ENCODE measurements at regions of chr12 and their contacts with region 1.

Region 1: GRCh38 chr12:74415633-74416032 is 122.0 kb upstream of the ATXN7L3B start:
- DNase-seq: peak; percentile 61
- ATAC-seq: no peak
- H3K4me3 ChIP-seq: no peak overlapping the region
- H3K27ac ChIP-seq: no peak overlapping the region
- H3K4me1 ChIP-seq: 0 out of 2 replicates have a peak, but pooled peaks cover 5% of the 10 kb centered on the region
- H3K27me3 ChIP-seq: no peaks in the 10 kb centered on the region
- CTCF ChIP-seq: peak; percentile 73

Region 2: DNA sequence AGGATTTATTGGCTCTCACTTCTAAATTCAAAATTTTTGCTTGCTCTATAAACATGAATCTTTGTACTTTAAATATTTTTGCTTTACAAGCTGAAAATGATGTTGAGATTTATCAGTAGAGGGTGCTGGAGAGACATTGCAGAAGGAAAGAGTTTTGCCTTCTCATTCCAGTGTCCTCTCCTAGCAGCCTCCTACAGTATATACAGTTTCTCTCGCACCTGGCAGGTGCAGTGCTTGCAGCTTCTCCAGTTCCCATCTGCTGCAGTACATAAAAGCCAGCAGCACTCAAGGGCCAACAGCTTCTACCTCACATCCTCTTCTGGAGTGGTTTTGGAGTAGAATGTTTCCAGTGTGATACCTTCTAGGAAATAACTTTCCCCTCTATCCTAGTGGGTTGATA is 479.8 kb before region 1 on chr12:
- CTCF ChIA-PET with region 1: interaction called, 3 read pairs
- POLR2A ChIA-PET with region 1: no interaction called
- intact Hi-C with region 1: loop called (anchors 1 kb)
- DNase-seq: peak; percentile 57
- ATAC-seq: peak; percentile 78
- H3K4me3 ChIP-seq: no peak overlapping the region
- H3K27ac ChIP-seq: no peak overlapping the region
- H3K4me1 ChIP-seq: no peaks in the 10 kb centered on the region
- H3K27me3 ChIP-seq: no peaks in the 10 kb centered on the region
- CTCF ChIP-seq: peak; percentile 68

Region 3: GRCh38 chr12:74111688-74112360 is 303.8 kb before region 1 on chr12:
- CTCF ChIA-PET with region 1: interaction called, 3 read pairs
- POLR2A ChIA-PET with region 1: no interaction called
- intact Hi-C with region 1: loop called (anchors 1 kb)
- DNase-seq: peak; percentile 58
- ATAC-seq: peak; percentile 70
- H3K4me3 ChIP-seq: no peak overlapping the region
- H3K27ac ChIP-seq: no peak overlapping the region
- H3K4me1 ChIP-seq: no peaks in the 10 kb centered on the region
- H3K27me3 ChIP-seq: no peaks in the 10 kb centered on the region
- CTCF ChIP-seq: peak; percentile 76

Region 4: DNA sequence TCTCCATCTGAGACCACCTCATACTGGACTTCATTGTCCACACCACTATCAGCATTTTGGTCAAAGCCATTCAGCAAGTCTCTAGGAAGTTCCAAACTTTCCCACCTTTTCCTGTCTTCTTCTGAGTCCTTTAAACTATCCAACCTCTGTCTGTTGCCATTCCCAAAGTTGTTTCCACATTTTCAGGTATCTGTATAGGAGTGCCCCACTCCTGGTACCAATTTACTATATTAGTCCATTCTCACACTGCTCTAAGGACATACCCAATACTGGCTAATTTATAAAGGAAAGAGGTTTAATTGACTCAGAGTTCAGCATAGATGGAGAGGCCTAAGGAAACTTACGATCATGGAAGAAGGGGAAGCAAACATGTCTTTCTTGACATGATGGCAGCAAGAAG is 170.2 kb before region 1 on chr12:
- CTCF ChIA-PET with region 1: no interaction called
- POLR2A ChIA-PET with region 1: no interaction called
- intact Hi-C with region 1: no loop called
- DNase-seq: no peak
- ATAC-seq: no peak
- H3K4me3 ChIP-seq: no peak overlapping the region
- H3K27ac ChIP-seq: no peak overlapping the region
- H3K4me1 ChIP-seq: no peaks in the 10 kb centered on the region
- H3K27me3 ChIP-seq: no peaks in the 10 kb centered on the region
- CTCF ChIP-seq: no peak

Region 5: GRCh38 chr12:74328616-74329015 is 87.0 kb before region 1 on chr12:
- CTCF ChIA-PET with region 1: no interaction called
- POLR2A ChIA-PET with region 1: no interaction called
- intact Hi-C with region 1: no loop called
- DNase-seq: no peak
- ATAC-seq: no peak
- H3K4me3 ChIP-seq: no peak overlapping the region
- H3K27ac ChIP-seq: no peak overlapping the region
- H3K4me1 ChIP-seq: no peaks in the 10 kb centered on the region
- H3K27me3 ChIP-seq: no peaks in the 10 kb centered on the region
- CTCF ChIP-seq: no peak

Region 6: DNA sequence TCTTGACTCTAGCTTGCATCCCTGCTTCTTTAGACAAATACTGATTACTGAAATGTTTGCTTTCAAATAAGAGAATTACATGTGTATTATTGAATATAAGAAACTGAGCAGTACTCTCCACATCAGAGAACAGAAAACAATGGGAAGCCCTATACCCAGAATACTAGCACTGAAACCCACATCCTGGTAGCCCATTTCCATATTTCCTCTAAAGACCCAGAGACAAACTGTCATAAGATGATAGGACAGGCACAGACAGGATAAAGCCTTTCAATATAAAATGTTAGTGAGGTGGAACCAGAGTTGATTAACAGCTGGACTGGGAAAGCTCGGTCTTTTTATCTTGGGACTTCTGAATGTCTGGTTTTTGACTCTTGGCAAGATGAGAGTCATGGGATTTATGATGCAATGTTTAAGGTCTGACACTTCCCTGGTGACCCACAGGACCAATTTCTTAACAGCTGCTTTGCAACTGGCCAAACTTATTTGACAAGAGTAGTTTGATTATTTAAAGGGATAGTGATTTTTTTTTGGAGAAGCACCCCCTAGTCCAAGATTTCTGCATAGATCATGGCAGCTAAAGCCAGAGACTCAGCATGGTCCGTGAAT is 44.9 kb before region 1 on chr12:
- CTCF ChIA-PET with region 1: interaction called, 6 read pairs
- POLR2A ChIA-PET with region 1: no interaction called
- intact Hi-C with region 1: loop called (anchors 1 kb)
- DNase-seq: no peak
- ATAC-seq: no peak
- H3K4me3 ChIP-seq: no peak overlapping the region
- H3K27ac ChIP-seq: no peak overlapping the region
- H3K4me1 ChIP-seq: no peaks in the 10 kb centered on the region
- H3K27me3 ChIP-seq: no peaks in the 10 kb centered on the region
- CTCF ChIP-seq: no peak

Region 7: GRCh38 chr12:74449872-74450271 is 34.2 kb after region 1 on chr12:
- CTCF ChIA-PET with region 1: no interaction called
- POLR2A ChIA-PET with region 1: no interaction called
- intact Hi-C with region 1: no loop called
- DNase-seq: peak; percentile 60
- ATAC-seq: peak; percentile 59
- H3K4me3 ChIP-seq: no peak overlapping the region
- H3K27ac ChIP-seq: no peak overlapping the region
- H3K4me1 ChIP-seq: no peaks in the 10 kb centered on the region
- H3K27me3 ChIP-seq: no peaks in the 10 kb centered on the region
- CTCF ChIP-seq: no peak

Region 8: DNA sequence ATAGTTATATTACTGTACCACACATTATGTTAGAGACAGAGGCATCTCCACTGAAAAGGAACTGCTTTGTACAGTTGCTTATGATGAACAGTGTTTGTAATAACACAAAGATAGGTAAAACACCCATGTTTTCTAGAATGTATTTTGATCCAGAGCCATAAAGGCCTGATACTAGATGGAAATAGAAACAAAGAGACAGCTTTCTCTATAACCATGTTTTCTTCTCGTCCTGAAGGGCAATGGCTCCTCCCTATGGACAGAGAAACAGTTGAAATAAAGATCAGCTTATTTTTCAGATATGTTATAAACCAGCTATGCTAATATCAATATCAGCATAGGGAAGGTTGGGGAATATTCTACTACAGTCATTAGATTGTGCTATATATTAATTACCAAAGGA is 231.2 kb after region 1 on chr12:
- CTCF ChIA-PET with region 1: interaction called, 5 read pairs
- POLR2A ChIA-PET with region 1: no interaction called
- intact Hi-C with region 1: loop called (anchors 2 kb)
- DNase-seq: peak; percentile 48
- ATAC-seq: peak; percentile 70
- H3K4me3 ChIP-seq: no peak overlapping the region
- H3K27ac ChIP-seq: no peak overlapping the region
- H3K4me1 ChIP-seq: no peaks in the 10 kb centered on the region
- H3K27me3 ChIP-seq: no peaks in the 10 kb centered on the region
- CTCF ChIP-seq: peak; percentile 60

Region 9: DNA sequence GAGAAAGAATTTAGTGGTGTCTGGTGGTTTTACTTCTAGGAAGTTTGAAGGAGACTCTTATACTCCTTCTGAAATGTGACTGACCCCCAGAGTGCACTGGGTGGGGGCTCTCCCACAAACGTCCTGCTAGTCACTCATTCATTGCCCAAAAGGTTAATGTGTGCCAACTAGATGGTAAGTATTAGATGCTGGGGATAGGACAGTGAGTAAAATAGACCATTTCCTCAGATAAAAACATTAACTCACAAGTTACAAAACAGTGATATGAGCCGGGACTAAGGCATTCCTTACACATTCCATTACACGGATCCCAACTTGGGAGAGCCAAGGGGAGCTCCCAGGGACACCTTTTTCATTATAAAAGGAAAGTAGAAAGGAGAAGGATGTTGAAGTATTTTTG is 307.1 kb after region 1 on chr12:
- CTCF ChIA-PET with region 1: no interaction called
- POLR2A ChIA-PET with region 1: no interaction called
- intact Hi-C with region 1: no loop called
- DNase-seq: no peak
- ATAC-seq: no peak
- H3K4me3 ChIP-seq: no peak overlapping the region
- H3K27ac ChIP-seq: no peak overlapping the region
- H3K4me1 ChIP-seq: no peaks in the 10 kb centered on the region
- H3K27me3 ChIP-seq: no peaks in the 10 kb centered on the region
- CTCF ChIP-seq: no peak